Breast epithelium (tissue), 4 donors: ENCODE measurements at regions of chr13 and their contacts with region 1.

Region 1: DNA sequence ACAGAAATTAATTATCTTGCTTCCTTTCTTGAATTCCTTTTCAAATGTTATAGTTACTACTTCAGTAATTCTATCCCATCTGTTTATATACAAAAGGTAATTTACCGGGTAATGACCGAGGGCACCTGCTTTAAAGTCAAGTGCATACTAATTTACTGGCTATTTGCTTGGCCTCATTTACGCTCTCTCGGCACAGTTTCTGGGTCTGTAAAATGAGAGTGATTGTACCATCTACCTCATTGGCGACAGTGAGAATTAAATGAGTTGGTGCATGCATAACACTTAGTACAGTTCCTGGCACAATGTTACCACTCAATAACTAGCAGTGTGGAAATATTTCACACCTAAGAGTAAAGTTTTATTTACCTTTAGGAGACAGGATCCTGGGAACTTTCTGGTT is 111.6 kb downstream of the GGACT start:
- DNase-seq: no peak
- H3K4me3 ChIP-seq: no peak overlapping the region
- H3K27ac ChIP-seq: no peak overlapping the region
- H3K4me1 ChIP-seq: no peaks in the 10 kb centered on the region
- H3K27me3 ChIP-seq: no peaks in the 10 kb centered on the region
- CTCF ChIP-seq: no peak
- POLR2A ChIP-seq: no peak

Region 2: DNA sequence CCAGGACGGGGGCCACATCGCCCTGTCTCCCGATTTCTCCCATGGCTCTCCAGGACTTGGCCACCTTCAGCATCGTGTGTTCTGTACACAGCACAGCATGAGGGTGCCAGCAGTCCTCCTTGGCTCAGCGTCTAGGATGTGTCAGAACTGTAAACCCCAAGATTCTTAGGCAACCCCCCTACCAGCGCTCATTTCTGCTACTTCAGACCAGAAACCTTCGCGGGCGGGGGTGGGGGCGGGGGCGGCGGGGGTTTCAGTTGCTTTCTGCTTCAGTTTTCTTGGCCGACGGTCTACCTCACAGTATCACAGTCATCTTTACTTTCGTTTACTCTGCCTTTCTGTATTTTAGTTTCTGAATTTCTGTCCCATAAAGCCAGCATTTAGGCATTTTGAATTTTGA is 29.2 kb after region 1 on chr13:
- intact Hi-C with region 1: loop called (anchors 1 kb)
- DNase-seq: no peak
- H3K4me3 ChIP-seq: no peak overlapping the region
- H3K27ac ChIP-seq: no peak overlapping the region
- H3K4me1 ChIP-seq: no peaks in the 10 kb centered on the region
- H3K27me3 ChIP-seq: no peaks in the 10 kb centered on the region
- CTCF ChIP-seq: no peak
- POLR2A ChIP-seq: no peak